ENCODE measurements at regions of chr5 and their contacts with region 1.

Region 1: GRCh38 chr5:36739751-36740221 is 133.4 kb downstream of the SLC1A3 start:
- DNase-seq: peak; percentile 44 to 85
- ATAC-seq: peak; percentile 43

Region 2: GRCh38 chr5:36866174-36866573 is 126.4 kb after region 1 on chr5:
- intact Hi-C with region 1: loop called in 1 of 2 experiments (anchors 5 kb)
- DNase-seq: no peak
- ATAC-seq: no peak

Region 3: GRCh38 chr5:36944607-36945225 is 204.9 kb after region 1 on chr5:
- intact Hi-C with region 1: loop called in 1 of 2 experiments (anchors 10 kb)
- DNase-seq: no peak
- ATAC-seq: no peak

Region 4: DNA sequence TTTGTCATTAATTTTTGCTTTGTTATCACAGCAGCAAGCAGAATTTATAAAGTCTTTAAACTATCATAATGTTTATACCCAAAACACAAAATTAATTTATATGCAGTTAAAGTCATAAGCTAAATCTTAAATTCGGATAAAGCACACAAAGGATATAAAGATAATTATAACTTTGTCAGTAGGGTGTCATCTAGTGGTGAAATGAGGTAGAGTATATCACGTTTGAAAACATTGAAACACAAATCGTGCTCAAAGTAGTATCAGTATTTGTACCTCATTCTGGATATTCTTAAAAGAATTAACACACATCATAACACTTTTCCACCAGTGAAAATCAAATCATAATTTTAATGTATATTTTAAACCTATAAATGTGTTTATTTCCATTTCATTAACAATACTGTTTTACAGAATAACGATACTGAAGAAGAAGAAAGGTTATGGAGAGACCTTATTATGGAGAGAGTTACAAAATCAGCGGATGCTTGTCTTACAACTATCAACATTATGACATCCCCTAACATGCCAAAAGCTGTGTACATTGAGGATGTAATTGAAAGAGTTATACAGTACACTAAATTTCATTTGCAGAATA is 266.3 kb after region 1 on chr5:
- intact Hi-C with region 1: loop called in 1 of 2 experiments (anchors 10 kb)
- DNase-seq: no peak
- ATAC-seq: no peak

Region 5: DNA sequence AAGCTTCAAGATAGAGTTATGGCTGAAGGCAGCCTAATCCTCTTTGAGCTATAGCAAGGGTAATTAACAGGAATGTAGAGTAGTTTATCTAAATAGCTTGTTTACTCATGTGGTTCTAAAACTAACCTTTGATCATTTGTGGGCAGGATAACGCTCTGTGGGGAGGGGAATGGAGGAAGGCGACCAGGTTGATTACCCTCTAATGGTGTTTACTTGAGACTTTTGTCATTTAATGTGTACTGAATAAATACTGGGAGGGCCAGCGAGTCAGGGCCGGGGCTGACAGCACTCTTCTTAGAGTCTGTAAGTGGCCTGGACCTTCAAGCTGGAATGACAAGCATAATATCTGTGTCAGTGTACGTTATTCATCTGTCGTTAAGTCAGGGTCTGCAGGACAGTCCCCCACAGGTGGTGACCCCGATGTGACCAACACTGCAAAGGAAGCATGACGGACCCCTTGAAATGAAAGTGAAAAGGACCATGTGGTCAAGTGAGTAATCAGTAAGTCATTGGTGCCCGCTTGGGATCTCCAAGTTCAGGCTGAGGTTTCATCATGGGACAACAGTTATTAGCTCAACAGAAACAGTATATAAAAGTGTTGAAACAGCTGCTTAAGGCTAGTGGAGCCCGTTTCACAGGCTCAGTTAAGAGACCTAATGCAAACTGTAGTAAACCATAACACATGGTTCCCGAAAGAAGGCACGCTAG is 346.8 kb after region 1 on chr5:
- intact Hi-C with region 1: no loop called
- DNase-seq: peak in 1 of 2 donors; percentile 20
- ATAC-seq: peak; percentile 89